ENCODE measurements at regions of chr17 and their contacts with region 1.

Region 1: GRCh38 chr17:48505787-48506645 is 24.8 kb downstream of the HOXB1 start:
- DNase-seq: peak; percentile 99
- ATAC-seq: peak; percentile 97
- H3K4me3 ChIP-seq: no peak overlapping the region
- H3K27ac ChIP-seq: peak overlapping the region; percentile 88
- H3K4me1 ChIP-seq: peaks cover 41% of the 10 kb centered on the region
- H3K27me3 ChIP-seq: no peaks in the 10 kb centered on the region
- CTCF ChIP-seq: peak; percentile 51

Region 2: GRCh38 chr17:48282303-48282702 is 223.7 kb before region 1 on chr17:
- CTCF ChIA-PET with region 1: no interaction called
- POLR2A ChIA-PET with region 1: interaction called, 23 read pairs
- intact Hi-C with region 1: no loop called
- DNase-seq: no peak
- ATAC-seq: no peak
- H3K4me3 ChIP-seq: no peak overlapping the region
- H3K27ac ChIP-seq: no peak overlapping the region
- H3K4me1 ChIP-seq: no peaks in the 10 kb centered on the region
- H3K27me3 ChIP-seq: peaks cover 5% of the 10 kb centered on the region; the same call in 1 of the 2 replicates
- CTCF ChIP-seq: no peak

Region 3: GRCh38 chr17:48492401-48493298 is 13.4 kb before region 1 on chr17:
- CTCF ChIA-PET with region 1: interaction called, 4 read pairs
- POLR2A ChIA-PET with region 1: no interaction called
- intact Hi-C with region 1: loop called (anchors 1 kb)
- DNase-seq: peak; percentile 77
- ATAC-seq: peak; percentile 91
- H3K4me3 ChIP-seq: peak overlapping the region; percentile 44
- H3K27ac ChIP-seq: no peak overlapping the region
- H3K4me1 ChIP-seq: peaks cover 58% of the 10 kb centered on the region
- H3K27me3 ChIP-seq: no peaks in the 10 kb centered on the region
- CTCF ChIP-seq: peak; percentile 94

Region 4: DNA sequence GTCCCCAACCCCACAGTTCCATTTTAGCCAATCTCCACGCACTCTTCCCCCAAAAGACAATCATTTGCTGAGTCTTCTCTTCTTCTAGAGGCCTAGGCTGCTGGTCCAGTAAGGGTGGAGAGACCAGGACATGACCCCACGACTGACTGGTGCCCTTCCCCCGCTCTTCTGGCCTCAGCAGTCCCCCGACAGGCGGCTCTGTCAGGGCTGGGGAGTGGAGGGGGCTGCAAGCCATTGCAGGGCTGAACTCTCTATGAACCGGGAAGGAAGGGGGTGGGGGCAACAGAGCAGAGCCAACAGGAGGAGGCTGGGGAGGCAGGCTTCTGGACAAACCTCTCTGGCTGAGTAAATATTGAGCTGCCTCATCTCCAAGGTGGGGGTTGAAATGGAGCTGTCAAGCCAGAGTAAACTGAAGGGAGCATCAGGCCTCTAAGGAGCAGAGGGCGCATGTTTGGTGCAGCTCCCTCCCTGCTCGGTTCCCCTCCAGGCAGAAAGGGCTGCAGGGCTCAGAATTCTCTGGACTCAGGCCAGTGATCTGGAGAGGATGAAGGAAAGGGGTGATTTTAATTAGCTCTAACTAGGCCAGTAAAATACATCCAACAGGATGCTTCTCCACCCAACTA is 16.1 kb after region 1 on chr17:
- CTCF ChIA-PET with region 1: interaction called, 8 read pairs
- POLR2A ChIA-PET with region 1: interaction called, 15 read pairs
- intact Hi-C with region 1: no loop called
- DNase-seq: peak; percentile 83
- ATAC-seq: peak; percentile 58
- H3K4me3 ChIP-seq: no peak overlapping the region
- H3K27ac ChIP-seq: 0 out of 2 replicates have a peak overlapping the region, but pooled peaks have one; percentile 4
- H3K4me1 ChIP-seq: peaks cover 27% of the 10 kb centered on the region
- H3K27me3 ChIP-seq: no peaks in the 10 kb centered on the region
- CTCF ChIP-seq: no peak

Region 5: DNA sequence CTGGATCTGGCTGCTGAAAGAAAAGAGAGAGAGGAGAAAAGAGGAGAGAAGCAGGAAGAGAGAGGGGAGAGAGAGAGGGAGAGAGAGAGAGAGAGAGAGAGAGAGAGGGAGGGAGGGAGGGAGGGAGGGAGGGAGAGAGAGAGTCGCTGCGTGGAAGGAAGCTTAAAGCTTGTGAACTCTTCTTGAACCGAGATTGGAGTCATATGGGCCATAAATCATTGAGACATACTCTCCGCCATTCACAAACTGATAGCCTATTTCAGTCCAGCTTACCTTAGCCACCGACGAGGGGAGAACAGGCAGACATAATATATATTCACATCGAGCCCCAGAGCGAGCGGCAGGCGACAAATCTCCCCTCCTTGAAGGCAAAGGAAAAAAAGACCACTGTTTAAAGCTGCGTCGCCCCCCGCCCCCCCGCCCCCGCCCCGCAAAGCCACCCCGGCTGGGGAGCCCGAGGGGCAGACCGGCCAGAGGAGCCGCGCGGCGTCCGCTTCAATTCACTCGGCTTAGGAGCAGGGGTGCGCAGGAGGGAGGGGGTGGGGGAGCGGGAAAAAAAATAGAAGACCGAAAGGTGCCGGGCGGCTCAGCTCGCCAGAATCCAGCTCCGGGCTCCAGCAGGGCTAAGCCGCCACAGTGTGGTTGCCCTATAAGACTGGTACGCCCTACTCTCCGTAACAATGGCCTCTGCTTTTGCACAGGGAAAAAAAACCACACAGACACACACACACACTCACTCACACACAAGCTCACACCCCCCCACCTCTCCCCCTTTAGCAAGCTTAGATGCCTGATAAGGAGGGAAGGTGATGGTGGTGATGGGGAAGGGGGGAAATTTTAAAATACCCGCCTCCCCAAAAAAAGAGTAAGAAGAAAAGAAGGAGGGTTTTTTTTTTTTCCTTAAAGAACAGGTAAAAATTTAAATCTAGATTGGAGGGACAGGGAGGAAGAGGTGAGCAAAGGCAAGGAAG is 49.5 kb after region 1 on chr17:
- CTCF ChIA-PET with region 1: interaction called, 10 read pairs
- POLR2A ChIA-PET with region 1: no interaction called
- intact Hi-C with region 1: no loop called
- DNase-seq: peak; percentile 72
- ATAC-seq: peak; percentile 72
- H3K4me3 ChIP-seq: peak overlapping the region; percentile 67
- H3K27ac ChIP-seq: peak overlapping the region; percentile 35; the same call in 1 of the 2 replicates
- H3K4me1 ChIP-seq: peaks cover 25% of the 10 kb centered on the region
- H3K27me3 ChIP-seq: no peaks in the 10 kb centered on the region
- CTCF ChIP-seq: no peak

Measured in PC-3 (cell line).